ENCODE measurements at regions of chr22 and their contacts with region 1.

Region 1: DNA sequence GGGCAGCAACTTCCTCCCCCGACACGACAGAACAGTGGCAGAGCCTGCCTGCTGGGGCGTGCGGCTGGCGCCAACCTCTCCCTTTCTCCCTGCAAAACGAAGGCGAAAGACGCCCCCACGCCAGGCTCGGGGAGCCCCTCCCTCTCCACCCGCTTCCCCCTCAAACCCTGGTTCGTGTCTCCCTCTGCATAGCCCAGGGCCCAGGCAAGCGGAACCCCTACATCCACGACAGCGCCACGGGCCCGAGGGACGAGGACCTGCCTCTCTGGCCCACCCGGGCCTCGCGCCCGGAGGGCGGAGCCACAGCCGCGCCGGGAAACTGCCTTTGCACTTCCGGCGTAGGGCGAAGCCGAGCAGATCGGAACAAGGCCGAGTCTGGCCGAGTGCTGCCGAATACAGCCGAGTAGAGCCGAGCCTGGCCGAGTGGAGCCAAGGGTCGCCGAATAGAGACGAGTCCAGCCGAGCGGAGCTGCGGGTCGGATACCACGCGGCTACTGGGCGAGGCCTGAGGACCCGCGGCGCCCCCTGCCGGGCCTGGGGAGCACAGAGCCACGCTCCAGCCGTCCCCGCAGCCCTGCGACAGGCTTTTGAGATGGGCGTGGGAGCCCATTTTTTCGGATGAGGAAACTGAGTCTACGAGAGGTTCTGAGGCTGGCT is 11.2 kb upstream of the C1QTNF6 start:
- DNase-seq: peak; percentile 97 to 100 (median 99)
- H3K4me3 ChIP-seq: peak overlapping the region; percentile 57 to 73
- H3K4me3 Mint-ChIP-seq: peak overlapping the region; percentile 79 to 91 (median 84)
- H3K27ac ChIP-seq: peak overlapping the region; percentile 93
- H3K27ac Mint-ChIP-seq: peak overlapping the region; percentile 89 to 96 (median 93)
- H3K4me1 ChIP-seq: peaks cover 39% of the 10 kb centered on the region
- H3K4me1 Mint-ChIP-seq: peaks cover 10 to 40% (median 22%) of the 10 kb centered on the region in 4 donors
- H3K27me3 ChIP-seq: no peaks in the 10 kb centered on the region
- H3K27me3 Mint-ChIP-seq: no peaks in the 10 kb centered on the region

Region 2: DNA sequence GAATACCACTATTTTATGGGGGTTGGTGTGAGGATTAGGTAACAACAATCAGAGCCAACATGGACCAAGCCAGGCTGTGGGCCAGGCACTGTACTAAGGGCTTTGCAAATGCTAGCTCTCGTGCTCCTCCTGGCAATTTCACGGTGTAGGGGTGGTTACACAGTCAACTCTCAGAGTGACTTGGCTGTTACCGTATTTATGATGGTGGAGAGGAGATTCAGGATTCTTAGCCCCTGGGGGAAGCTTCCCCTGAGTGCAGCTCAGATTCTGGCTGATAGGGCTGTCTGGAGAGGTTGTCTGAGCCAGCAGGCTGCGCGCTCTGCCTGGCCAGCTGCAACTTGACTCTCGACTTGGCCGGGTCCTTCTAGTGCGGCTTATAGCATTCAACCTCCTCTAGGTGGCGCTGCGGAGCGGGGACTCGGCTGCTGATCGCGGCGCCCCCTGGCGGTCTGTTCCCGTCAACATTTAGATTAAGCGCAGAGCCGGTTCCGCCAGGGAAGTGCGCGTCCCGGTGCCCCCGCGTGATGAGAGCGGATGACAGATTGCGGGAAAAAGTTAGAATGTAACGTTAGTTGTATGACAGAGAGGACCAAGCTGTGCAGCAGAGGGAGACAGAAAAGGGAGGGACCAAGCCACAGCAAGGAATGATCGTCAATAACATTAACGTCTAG is 343.0 kb before region 1 on chr22:
- CTCF ChIA-PET with region 1: interaction called, 5 read pairs
- POLR2A ChIA-PET with region 1: no interaction called
- intact Hi-C with region 1: loop called (anchors 10 kb)
- DNase-seq: peak; percentile 85 to 90 (median 86)
- H3K4me3 ChIP-seq: no peak overlapping the region
- H3K4me3 Mint-ChIP-seq: peak overlapping the region in 6 of 8 donors; percentile 58 to 80 (median 68)
- H3K27ac ChIP-seq: no peak overlapping the region
- H3K27ac Mint-ChIP-seq: peak overlapping the region in 6 of 7 donors; percentile 44 to 92 (median 73)
- H3K4me1 ChIP-seq: peaks cover 31% of the 10 kb centered on the region
- H3K4me1 Mint-ChIP-seq: peaks cover 16 to 39% (median 28%) of the 10 kb centered on the region in 4 donors
- H3K27me3 ChIP-seq: no peaks in the 10 kb centered on the region
- H3K27me3 Mint-ChIP-seq: peaks cover 2 to 4% of the 10 kb centered on the region in 2 donors

Region 3: DNA sequence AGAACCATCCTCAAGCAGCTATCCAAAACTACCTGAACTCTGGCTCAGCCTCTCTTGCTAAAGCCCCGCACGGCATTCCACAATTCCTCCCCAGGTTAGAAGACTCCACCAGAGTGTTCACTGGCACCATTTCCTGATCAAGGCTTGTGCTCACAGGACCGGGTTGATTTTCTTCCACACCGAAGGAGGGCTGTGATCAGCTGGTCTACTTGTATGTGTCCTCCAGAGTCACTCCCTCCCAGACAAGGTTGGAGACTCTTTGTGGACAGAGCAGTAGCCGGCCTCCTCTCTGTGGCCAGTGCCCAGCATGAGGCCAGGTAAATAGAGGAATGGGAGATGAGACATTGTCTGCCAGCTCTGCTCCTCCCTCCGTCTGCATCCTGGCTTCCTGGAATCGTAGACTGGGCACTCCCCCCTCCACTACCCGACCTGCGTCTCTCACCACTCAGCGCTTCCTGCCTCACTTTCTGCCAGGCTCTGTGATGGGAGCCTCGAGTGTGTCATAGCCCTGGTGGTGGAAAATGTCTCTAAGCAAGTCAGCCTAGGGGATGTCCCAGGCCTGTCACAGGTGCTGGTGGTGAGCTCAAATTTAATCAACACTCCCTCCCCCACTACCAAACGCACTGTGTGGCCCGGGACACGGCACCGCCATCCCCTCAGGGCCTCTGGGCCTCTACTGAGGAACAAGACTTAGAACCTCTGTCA is 77.2 kb before region 1 on chr22:
- CTCF ChIA-PET with region 1: interaction called, 18 read pairs
- POLR2A ChIA-PET with region 1: interaction called, 46 read pairs
- intact Hi-C with region 1: loop called (anchors 1 kb)
- DNase-seq: peak; percentile 92 to 99 (median 95)
- H3K4me3 ChIP-seq: peak overlapping the region in 1 of 2 donors; percentile 36
- H3K4me3 Mint-ChIP-seq: peak overlapping the region; percentile 76 to 90 (median 84)
- H3K27ac ChIP-seq: peak overlapping the region; percentile 98
- H3K27ac Mint-ChIP-seq: peak overlapping the region; percentile 98 to 100 (median 99)
- H3K4me1 ChIP-seq: peaks cover 58% of the 10 kb centered on the region
- H3K4me1 Mint-ChIP-seq: peaks cover 39 to 75% (median 54%) of the 10 kb centered on the region in 4 donors
- H3K27me3 ChIP-seq: no peaks in the 10 kb centered on the region
- H3K27me3 Mint-ChIP-seq: no peaks in the 10 kb centered on the region

Region 4: GRCh38 chr22:37186228-37186996 is 12.8 kb before region 1 on chr22:
- CTCF ChIA-PET with region 1: interaction called, 10 read pairs
- POLR2A ChIA-PET with region 1: interaction called, 26 read pairs
- intact Hi-C with region 1: no loop called
- DNase-seq: peak; percentile 68 to 79 (median 76)
- H3K4me3 ChIP-seq: peak overlapping the region in 1 of 2 donors; percentile 1
- H3K4me3 Mint-ChIP-seq: peak overlapping the region; percentile 74 to 87 (median 80)
- H3K27ac ChIP-seq: peak overlapping the region; percentile 31
- H3K27ac Mint-ChIP-seq: peak overlapping the region; percentile 73 to 95 (median 85)
- H3K4me1 ChIP-seq: peaks cover 61% of the 10 kb centered on the region
- H3K4me1 Mint-ChIP-seq: peaks cover 24 to 56% (median 40%) of the 10 kb centered on the region in 4 donors
- H3K27me3 ChIP-seq: no peaks in the 10 kb centered on the region
- H3K27me3 Mint-ChIP-seq: no peaks in the 10 kb centered on the region

Region 5: GRCh38 chr22:37229805-37230672 is 30.8 kb after region 1 on chr22:
- CTCF ChIA-PET with region 1: interaction called, 72 read pairs
- POLR2A ChIA-PET with region 1: interaction called, 101 read pairs
- intact Hi-C with region 1: loop called (anchors 2 kb)
- DNase-seq: peak; percentile 87 to 97 (median 88)
- H3K4me3 ChIP-seq: peak overlapping the region; percentile 48 to 51
- H3K4me3 Mint-ChIP-seq: peak overlapping the region; percentile 75 to 88 (median 82)
- H3K27ac ChIP-seq: peak overlapping the region; percentile 97
- H3K27ac Mint-ChIP-seq: peak overlapping the region; percentile 87 to 100 (median 100)
- H3K4me1 ChIP-seq: peaks cover 96% of the 10 kb centered on the region
- H3K4me1 Mint-ChIP-seq: peaks cover 67 to 92% (median 83%) of the 10 kb centered on the region in 4 donors
- H3K27me3 ChIP-seq: no peaks in the 10 kb centered on the region
- H3K27me3 Mint-ChIP-seq: no peaks in the 10 kb centered on the region

Measured in CD4-positive, alpha-beta memory T cell (primary cell).